PC-9 (cell line): ENCODE measurements at regions of chr10 and their contacts with region 1.

Region 1: DNA sequence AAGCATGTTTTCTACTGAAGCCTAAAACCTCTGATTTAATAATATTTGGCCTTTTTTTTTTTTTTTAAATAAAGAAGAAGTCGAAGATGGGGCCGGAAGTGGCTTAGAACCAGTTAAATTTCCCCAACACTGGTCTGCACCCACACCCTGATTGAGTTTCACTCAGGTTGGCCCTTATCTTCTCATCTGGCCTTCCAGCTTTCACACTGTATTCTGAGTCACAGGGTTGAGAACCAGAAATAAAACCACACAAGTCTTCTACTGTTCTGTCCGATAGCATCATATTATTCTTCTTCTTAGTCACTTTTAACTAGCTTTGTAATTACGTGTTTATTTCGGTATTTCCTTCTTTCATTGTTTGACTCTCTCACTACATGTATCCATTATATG is 9.9 kb downstream of the ZNF365 start:
- DNase-seq: peak; percentile 66 to 99
- H3K4me3 ChIP-seq: peak overlapping the region; percentile 9; the same call in 1 of the 2 replicates
- H3K27ac ChIP-seq: peak overlapping the region; percentile 88
- H3K4me1 ChIP-seq: peaks cover 48% of the 10 kb centered on the region
- H3K27me3 ChIP-seq: no peaks in the 10 kb centered on the region
- CTCF ChIP-seq: no peak

Region 2: DNA sequence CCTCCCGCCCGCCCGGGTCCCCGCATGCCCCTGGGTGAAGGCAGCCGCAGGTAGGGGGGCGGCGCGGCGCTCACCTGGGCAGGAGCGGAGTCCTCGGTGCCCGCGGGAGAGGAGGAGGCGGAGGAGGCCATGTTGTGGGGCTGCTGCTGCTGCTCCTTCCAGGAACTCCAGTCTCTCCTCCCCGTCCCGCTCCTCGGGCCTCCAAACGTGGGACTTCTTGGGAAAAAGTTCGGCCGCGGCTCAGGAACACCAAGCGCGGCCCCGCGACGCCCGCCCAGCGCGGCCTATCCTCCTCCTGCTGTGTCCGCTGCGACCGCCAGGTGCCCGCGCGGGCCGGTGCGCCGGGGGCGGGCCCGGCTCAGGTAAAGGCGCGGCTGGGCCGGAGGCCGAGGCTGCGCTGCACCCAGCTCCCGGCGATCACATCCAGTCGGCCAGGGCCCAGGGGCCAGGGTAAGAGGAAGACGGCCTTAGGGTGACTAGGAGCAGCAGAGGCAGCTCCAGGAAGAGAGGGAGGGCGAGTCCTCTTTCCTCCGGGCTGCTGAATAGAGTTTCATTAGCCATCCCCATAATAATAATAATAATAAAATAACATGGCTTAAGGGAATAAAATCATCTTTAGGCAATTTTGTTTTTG is 1650.7 kb before region 1 on chr10:
- CTCF ChIA-PET with region 1: no interaction called
- POLR2A ChIA-PET with region 1: interaction called, 28 read pairs
- intact Hi-C with region 1: no loop called
- DNase-seq: peak; percentile 60 to 80
- H3K4me3 ChIP-seq: peak overlapping the region; percentile 70
- H3K27ac ChIP-seq: no peak overlapping the region
- H3K4me1 ChIP-seq: peaks cover 39% of the 10 kb centered on the region
- H3K27me3 ChIP-seq: no peaks in the 10 kb centered on the region
- CTCF ChIP-seq: peak; percentile 61; the same call in 1 of the 2 replicates

Region 3: GRCh38 chr10:61896854-61897661 is 487.0 kb before region 1 on chr10:
- CTCF ChIA-PET with region 1: no interaction called
- POLR2A ChIA-PET with region 1: no interaction called
- intact Hi-C with region 1: loop called (anchors 2 kb)
- DNase-seq: no peak
- H3K4me3 ChIP-seq: no peak overlapping the region
- H3K27ac ChIP-seq: no peak overlapping the region
- H3K4me1 ChIP-seq: peaks cover 22% of the 10 kb centered on the region
- H3K27me3 ChIP-seq: no peaks in the 10 kb centered on the region
- CTCF ChIP-seq: peak; percentile 64

Region 4: DNA sequence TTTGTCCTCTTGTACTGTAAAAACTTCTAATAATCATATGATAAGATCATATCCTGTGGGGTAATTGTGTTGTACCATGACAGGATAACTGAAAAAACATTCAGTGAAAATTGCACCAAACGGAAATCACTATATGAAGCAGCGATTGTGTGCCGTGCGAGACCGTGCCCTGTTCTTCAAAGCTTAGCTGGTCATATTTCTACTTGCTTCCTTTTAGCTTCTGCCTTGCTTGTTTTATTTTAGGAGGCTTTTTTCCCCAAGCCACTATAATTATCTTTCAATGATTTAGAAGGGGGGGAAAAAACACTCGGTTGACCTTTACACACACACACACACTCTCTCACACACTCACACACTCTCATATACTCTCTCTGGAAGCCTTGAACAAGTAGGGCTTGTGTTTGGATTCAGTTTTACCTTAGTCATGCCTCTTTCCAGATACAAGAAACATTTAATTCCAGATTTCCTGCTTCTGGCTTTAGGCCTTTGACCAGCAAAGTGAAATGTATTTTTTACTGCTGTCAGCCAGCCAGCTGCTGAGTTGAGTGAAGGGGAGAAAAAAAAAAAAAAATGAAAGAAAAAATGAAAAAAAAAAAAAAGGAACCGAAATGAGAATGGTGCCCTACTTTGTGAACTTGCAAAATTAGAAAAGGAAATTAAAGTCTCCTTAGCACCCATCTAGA is 301.2 kb before region 1 on chr10:
- CTCF ChIA-PET with region 1: no interaction called
- POLR2A ChIA-PET with region 1: no interaction called
- intact Hi-C with region 1: no loop called
- DNase-seq: peak in 1 of 2 experiments; percentile 35
- H3K4me3 ChIP-seq: no peak overlapping the region
- H3K27ac ChIP-seq: peak overlapping the region; percentile 41
- H3K4me1 ChIP-seq: peaks cover 46% of the 10 kb centered on the region
- H3K27me3 ChIP-seq: no peaks in the 10 kb centered on the region
- CTCF ChIP-seq: no peak

Region 5: GRCh38 chr10:62268399-62269114 is 115.5 kb before region 1 on chr10 and contains the start of gene RTKN2:
- CTCF ChIA-PET with region 1: interaction called, 10 read pairs
- POLR2A ChIA-PET with region 1: interaction called, 3 read pairs
- intact Hi-C with region 1: loop called (anchors 2 kb)
- DNase-seq: peak; percentile 90 to 96
- H3K4me3 ChIP-seq: peak within 1 kb of the TSS; percentile 95
- H3K27ac ChIP-seq: peak within 1 kb of the TSS; percentile 54
- H3K4me1 ChIP-seq: peaks cover 33% of the 10 kb centered on the region
- H3K27me3 ChIP-seq: no peaks in the 10 kb centered on the region
- CTCF ChIP-seq: no peak
- total RNA-seq, gene RTKN2: 16.1 and 18.5 TPM in 2 replicates

Region 6: DNA sequence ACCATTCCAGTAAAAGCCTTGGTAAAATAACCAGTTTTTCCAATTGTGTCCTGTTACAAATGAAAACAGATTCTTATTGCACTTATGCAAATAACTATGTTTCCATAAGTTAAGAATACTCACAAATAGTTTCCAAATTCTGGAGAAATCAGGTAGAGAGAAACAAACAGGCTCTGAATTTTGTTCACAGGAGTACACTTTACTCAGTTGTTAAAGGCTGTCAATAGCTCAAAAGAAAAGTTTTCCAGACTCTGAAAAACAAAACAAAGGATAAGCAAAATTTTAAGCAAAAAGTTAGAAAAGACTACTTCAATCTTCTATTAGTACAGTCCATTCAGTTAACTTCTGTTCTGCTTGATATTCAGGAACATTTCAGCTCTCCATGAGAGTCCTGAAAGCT is 42.6 kb before region 1 on chr10:
- CTCF ChIA-PET with region 1: no interaction called
- POLR2A ChIA-PET with region 1: no interaction called
- intact Hi-C with region 1: no loop called
- DNase-seq: no peak
- H3K4me3 ChIP-seq: no peak overlapping the region
- H3K27ac ChIP-seq: no peak overlapping the region
- H3K4me1 ChIP-seq: no peaks in the 10 kb centered on the region
- H3K27me3 ChIP-seq: no peaks in the 10 kb centered on the region
- CTCF ChIP-seq: no peak

Region 7: GRCh38 chr10:62422068-62422590 is 38.1 kb after region 1 on chr10:
- CTCF ChIA-PET with region 1: no interaction called
- POLR2A ChIA-PET with region 1: no interaction called
- intact Hi-C with region 1: no loop called
- DNase-seq: no peak
- H3K4me3 ChIP-seq: no peak overlapping the region
- H3K27ac ChIP-seq: no peak overlapping the region
- H3K4me1 ChIP-seq: no peaks in the 10 kb centered on the region; the same call in 1 of the 2 replicates
- H3K27me3 ChIP-seq: no peaks in the 10 kb centered on the region
- CTCF ChIP-seq: no peak

Region 8: GRCh38 chr10:62437696-62438095 is 53.6 kb after region 1 on chr10:
- CTCF ChIA-PET with region 1: no interaction called
- POLR2A ChIA-PET with region 1: no interaction called
- intact Hi-C with region 1: loop called (anchors 2 kb)
- DNase-seq: peak in 1 of 2 experiments; percentile 67
- H3K4me3 ChIP-seq: no peak overlapping the region
- H3K27ac ChIP-seq: no peak overlapping the region
- H3K4me1 ChIP-seq: peaks cover 17% of the 10 kb centered on the region
- H3K27me3 ChIP-seq: no peaks in the 10 kb centered on the region
- CTCF ChIP-seq: peak; percentile 95

Region 9: GRCh38 chr10:62577666-62578291 is 193.7 kb after region 1 on chr10:
- CTCF ChIA-PET with region 1: no interaction called
- POLR2A ChIA-PET with region 1: no interaction called
- intact Hi-C with region 1: no loop called
- DNase-seq: no peak
- H3K4me3 ChIP-seq: no peak overlapping the region
- H3K27ac ChIP-seq: no peak overlapping the region
- H3K4me1 ChIP-seq: no peaks in the 10 kb centered on the region
- H3K27me3 ChIP-seq: peaks cover 2% of the 10 kb centered on the region; the same call in 1 of the 2 replicates
- CTCF ChIP-seq: no peak

Region 10: DNA sequence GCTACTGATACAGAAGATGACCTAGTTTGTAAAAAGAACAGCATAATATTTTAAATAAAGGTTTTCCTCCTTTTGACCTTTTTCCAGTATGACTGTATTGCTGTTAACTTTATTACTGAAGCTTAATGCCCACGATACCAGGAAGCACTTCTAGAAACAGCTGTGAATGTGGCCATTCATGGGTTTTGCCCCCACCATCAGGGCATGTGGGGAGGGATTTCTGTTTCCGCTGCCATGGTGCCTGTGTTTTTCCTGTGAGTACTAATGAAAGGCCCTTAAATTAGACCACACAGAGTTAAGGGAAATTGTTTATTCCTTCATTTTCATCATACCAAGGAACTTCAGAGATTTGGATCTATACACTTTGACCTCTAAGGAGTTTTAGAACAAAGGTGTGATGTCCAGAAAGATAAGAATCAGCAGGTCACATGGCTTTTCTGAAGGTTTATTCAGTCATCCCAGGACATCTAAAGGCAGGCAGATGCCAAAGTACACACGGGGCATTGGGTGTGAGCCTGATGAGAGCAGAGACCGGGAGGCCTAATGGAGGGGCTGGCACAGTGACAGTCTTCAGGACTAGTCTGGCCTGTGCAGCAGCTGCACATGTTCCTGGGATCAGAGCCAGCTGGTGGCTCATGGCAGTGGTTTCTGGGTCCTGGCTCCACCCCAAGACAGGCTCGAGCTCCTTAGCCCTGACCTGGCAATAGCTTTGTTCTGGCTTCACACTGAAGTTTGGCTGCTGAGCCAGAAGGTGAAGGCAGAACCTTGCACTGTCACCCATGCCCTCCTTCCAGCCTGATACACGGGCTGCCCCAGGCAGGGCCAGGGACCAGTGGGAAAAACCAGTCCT is 1328.0 kb after region 1 on chr10:
- CTCF ChIA-PET with region 1: no interaction called
- POLR2A ChIA-PET with region 1: no interaction called
- intact Hi-C with region 1: loop called (anchors 5 kb)
- DNase-seq: peak; percentile 98 to 99
- H3K4me3 ChIP-seq: no peak overlapping the region
- H3K27ac ChIP-seq: peak overlapping the region; percentile 53
- H3K4me1 ChIP-seq: peaks cover 39% of the 10 kb centered on the region
- H3K27me3 ChIP-seq: no peaks in the 10 kb centered on the region
- CTCF ChIP-seq: no peak